ENCODE measurements at regions of chr15 and their contacts with region 1.

Region 1: DNA sequence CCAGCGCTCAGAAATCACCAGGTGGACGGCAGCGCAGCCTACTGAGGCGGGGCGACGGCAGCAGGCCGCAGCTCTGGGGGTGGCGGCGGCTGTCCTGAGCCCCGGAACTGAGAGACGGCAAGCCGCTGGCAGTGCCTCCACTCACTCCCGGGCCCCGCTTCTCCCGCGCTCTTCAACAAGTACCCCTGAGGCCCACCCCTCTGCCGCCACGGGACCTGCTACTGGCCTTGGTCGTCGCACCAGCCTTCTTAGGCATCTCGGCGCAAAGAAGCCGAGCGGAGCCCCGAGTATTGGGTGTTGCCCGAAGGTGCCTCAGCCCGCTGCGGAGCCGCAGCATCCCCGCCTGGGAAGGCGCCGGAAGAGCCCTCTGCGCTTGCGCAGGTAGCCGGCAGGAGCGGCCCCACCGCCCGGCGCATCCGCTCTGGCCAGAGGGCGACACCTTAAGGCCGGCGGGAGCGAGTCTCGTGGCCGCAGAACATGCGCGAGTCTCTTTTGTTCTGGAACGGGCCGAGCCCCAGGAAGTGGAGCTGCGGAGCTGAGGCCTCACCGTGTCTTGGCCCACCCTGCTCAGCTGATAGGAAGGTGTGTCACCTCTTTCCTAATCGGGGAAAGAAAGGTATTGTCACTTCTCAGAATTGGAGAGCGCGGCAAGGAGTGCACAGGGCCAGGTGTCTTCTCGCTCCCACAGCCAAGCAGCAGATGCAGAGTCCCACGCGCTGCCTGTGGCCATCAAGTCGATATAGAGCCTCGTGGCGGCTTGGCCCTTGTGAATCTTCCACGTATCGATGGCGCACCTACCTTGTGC is at the start of gene C15orf40:
- DNase-seq: peak; percentile 79 to 89
- H3K4me3 ChIP-seq: peak within 1 kb of the TSS; percentile 92
- H3K27ac ChIP-seq: peak within 1 kb of the TSS; percentile 43
- H3K4me1 ChIP-seq: peaks cover 15% of the 10 kb centered on the region
- H3K27me3 ChIP-seq: no peaks in the 10 kb centered on the region
- CTCF ChIP-seq: 0 out of 2 replicates have a peak, but pooled peaks have one; percentile 33
- total RNA-seq, gene C15orf40: 21.2 and 27.8 TPM in 2 replicates

Region 2: DNA sequence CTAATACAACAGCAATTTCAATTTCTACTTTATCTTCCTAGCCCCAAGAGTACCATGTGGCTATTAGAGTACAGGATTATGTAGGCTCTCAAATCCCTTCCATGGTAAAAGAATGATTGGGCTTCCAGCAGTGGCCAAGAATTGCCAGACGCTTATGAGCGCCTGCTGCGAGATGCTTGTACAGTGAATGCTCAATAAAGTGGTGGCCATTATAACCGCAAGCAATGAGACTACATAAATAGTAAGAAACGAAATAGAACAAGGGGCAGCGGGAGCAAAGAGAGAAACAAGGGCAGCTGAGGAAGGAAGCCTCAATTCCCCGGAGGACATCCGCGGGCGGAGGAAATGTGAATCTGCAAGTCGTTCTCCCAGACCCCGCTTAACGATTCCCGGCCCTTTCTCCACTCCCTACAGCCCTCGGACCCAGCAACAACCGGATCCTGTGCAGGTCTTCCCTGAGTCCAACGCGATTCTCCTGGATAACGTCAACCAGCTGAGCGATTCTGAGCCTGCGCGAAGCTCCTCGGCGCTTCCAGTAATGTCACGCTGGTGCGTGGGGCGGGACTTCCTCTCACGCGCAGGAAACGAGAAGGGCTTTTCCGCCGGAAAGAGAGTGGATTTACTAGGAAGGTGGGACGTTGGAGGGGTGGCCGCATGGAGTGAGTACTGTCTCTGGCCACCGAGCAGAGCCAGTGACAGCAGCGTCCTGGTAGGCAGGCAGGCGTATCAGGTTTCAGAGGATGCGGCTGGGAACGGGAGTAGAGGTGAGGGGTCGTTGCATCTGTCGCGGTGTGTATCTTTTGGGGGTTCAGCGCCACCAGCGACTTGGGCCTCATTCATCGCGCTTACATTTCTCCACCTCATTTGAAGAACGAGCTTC is 261.3 kb before region 1 on chr15:
- CTCF ChIA-PET with region 1: no interaction called
- POLR2A ChIA-PET with region 1: no interaction called
- intact Hi-C with region 1: loop called (anchors 2 kb)
- DNase-seq: peak; percentile 84 to 89
- H3K4me3 ChIP-seq: peak overlapping the region; percentile 83
- H3K27ac ChIP-seq: peak overlapping the region; percentile 74
- H3K4me1 ChIP-seq: peaks cover 25% of the 10 kb centered on the region
- H3K27me3 ChIP-seq: no peaks in the 10 kb centered on the region
- CTCF ChIP-seq: no peak

Region 3: GRCh38 chr15:83066734-83067637 is 55.5 kb after region 1 on chr15 and contains the start of gene BTBD1:
- CTCF ChIA-PET with region 1: no interaction called
- POLR2A ChIA-PET with region 1: no interaction called
- intact Hi-C with region 1: loop called (anchors 1 kb)
- DNase-seq: peak; percentile 86 to 93
- H3K4me3 ChIP-seq: peak within 1 kb of the TSS; percentile 95
- H3K27ac ChIP-seq: peak within 1 kb of the TSS; percentile 72
- H3K4me1 ChIP-seq: peaks cover 27% of the 10 kb centered on the region
- H3K27me3 ChIP-seq: no peaks in the 10 kb centered on the region
- CTCF ChIP-seq: no peak; the same call in 1 of the 2 replicates
- total RNA-seq, gene BTBD1: 24.7 and 28.2 TPM in 2 replicates

Measured in PC-9 (cell line).